K562 (cell line): ENCODE measurements at regions of chr15 and their contacts with region 1.

Region 1: GRCh38 chr15:100438570-100438969 is 90.2 kb downstream of the CERS3 start:
- DNase-seq: peak in 1 of 4 experiments; percentile 30
- ATAC-seq: no peak
- H3K4me3 ChIP-seq: no peak overlapping the region
- H3K27ac ChIP-seq: no peak overlapping the region
- H3K4me1 ChIP-seq: no peaks in the 10 kb centered on the region; a peak in 1 of 5 replicates
- H3K27me3 ChIP-seq: no peaks in the 10 kb centered on the region
- CTCF ChIP-seq: no peak
- EP300 ChIP-seq: no peak
- POLR2A ChIP-seq: no peak
- RAD21 ChIP-seq: no peak

Region 2: GRCh38 chr15:101078682-101079323 is 640.2 kb after region 1 on chr15:
- CTCF ChIA-PET with region 1: no interaction called
- POLR2A ChIA-PET with region 1: no interaction called
- in situ Hi-C with region 1: loop called (anchors 5 kb)
- intact Hi-C with region 1: no loop called
- DNase-seq: no peak
- ATAC-seq: no peak
- H3K4me3 ChIP-seq: no peak overlapping the region
- H3K27ac ChIP-seq: no peak overlapping the region
- H3K4me1 ChIP-seq: peaks cover 0 to 10% of the 10 kb centered on the region in 2 experiments; a peak in 3 of 5 replicates
- H3K27me3 ChIP-seq: peaks cover 16 to 45% of the 10 kb centered on the region in 2 experiments; a peak in 4 of 5 replicates
- CTCF ChIP-seq: no peak
- EP300 ChIP-seq: no peak
- POLR2A ChIP-seq: no peak
- RAD21 ChIP-seq: no peak